ENCODE measurements at regions of chr12 and their contacts with region 1.

Region 1: GRCh38 chr12:103877934-103878510 is 37.0 kb upstream of the NT5DC3 start:
- DNase-seq: peak; percentile 66
- H3K4me3 ChIP-seq: no peak overlapping the region; a peak in 1 of 4 replicates
- H3K27ac ChIP-seq: no peak overlapping the region
- H3K4me1 ChIP-seq: peaks cover 0 to 7% of the 10 kb centered on the region in 2 experiments; a peak in 2 of 4 replicates
- H3K27me3 ChIP-seq: no peaks in the 10 kb centered on the region
- CTCF ChIP-seq: peak; percentile 81
- EP300 ChIP-seq: no peak
- RAD21 ChIP-seq: peak; percentile 90

Region 2: GRCh38 chr12:103865151-103865730 is 12.8 kb before region 1 on chr12:
- CTCF ChIA-PET with region 1: interaction called, 14 read pairs
- POLR2A ChIA-PET with region 1: no interaction called
- DNase-seq: no peak
- H3K4me3 ChIP-seq: no peak overlapping the region
- H3K27ac ChIP-seq: no peak overlapping the region
- H3K4me1 ChIP-seq: no peaks in the 10 kb centered on the region; a peak in 1 of 4 replicates
- H3K27me3 ChIP-seq: no peaks in the 10 kb centered on the region
- CTCF ChIP-seq: no peak
- EP300 ChIP-seq: no peak
- RAD21 ChIP-seq: no peak

Region 3: GRCh38 chr12:103986829-103987228 is 108.8 kb after region 1 on chr12:
- CTCF ChIA-PET with region 1: no interaction called
- POLR2A ChIA-PET with region 1: no interaction called
- DNase-seq: no peak
- H3K4me3 ChIP-seq: no peak overlapping the region
- H3K27ac ChIP-seq: peak overlapping the region in 1 of 2 experiments; percentile 58; a peak in 2 of 4 replicates
- H3K4me1 ChIP-seq: no peaks in the 10 kb centered on the region
- H3K27me3 ChIP-seq: no peaks in the 10 kb centered on the region
- CTCF ChIP-seq: no peak
- EP300 ChIP-seq: no peak
- RAD21 ChIP-seq: no peak

Measured in SK-N-SH (cell line).